GM10248 (cell line): ENCODE measurements at regions of chr17 and their contacts with region 1.

Region 1: DNA sequence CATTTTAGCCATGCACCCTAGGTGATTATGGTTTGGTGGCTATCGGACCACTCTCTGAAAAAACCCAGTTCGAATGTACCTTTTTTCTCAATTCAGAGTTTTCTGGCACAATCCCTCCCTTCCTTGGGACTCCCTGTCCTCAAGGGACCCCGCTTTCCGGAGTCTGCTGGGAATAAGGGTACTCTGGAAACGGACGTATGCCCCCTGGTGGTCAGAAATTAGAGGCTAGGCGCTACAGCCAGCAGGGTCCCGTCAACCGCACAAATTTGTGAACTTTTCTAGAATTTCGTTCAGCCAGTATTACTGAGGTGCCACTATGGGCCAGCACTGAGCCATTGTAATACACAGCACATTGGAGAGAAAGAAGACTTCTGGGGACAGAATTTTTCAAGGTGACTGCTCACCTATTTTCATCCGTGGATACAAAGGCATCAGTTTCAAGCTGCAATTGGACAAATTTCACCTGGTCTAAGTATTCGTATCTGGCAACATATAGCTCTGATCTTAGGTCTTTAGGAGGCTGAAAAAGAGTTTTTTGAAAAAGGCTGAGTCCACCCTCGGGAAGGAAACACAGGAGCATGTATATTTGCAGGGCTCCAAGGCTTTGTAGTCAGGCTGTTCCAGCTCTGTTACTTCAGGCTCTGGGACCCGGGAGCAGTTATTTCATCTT is 27.1 kb upstream of the CRYBA1 start:
- DNase-seq: peak; percentile 80
- CTCF ChIP-seq: peak; percentile 87

Region 2: DNA sequence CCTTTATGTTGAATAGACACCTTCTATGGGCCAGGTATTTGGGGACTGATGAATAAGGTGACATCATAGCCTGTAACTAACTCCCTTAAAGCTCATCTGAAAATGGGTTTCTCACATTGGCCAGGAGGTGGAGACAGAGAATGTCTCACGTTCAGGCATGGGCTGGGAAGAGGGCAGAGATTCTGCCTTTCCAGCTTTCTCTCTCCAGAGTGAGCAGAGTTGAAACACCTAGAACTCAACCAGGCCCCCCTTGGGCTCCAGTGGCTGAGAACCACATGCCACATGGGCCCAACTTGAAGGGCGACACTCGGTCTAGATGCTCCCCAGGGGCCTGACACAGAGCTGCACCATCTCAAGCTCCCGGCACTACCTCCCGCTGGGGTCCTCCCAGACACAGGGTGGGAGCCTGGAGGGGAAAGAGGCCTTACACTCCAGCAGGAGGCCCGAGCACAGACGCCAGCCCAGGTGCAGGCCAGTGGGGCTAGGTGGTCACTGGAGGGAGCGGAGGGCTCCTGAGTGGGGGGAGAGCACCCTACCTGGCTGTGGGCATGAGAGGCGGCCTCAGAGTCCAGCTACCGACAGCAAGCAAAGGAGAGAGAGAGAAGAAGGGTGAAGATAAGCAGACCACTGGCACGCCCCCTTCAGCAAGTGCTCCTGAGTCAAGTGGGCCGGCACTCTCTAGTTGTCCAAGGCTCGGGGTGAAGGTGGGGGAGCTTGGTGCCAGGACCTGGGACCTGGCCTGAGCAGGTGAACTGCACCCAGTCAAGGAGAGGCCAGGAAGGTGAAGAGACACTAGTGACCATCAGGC is 95.2 kb before region 1 on chr17:
- CTCF ChIA-PET with region 1: interaction called, 18 read pairs
- POLR2A ChIA-PET with region 1: no interaction called
- DNase-seq: peak; percentile 79
- CTCF ChIP-seq: peak; percentile 68

Region 3: GRCh38 chr17:29180034-29180787 is 39.3 kb before region 1 on chr17 and contains the start of gene MYO18A:
- CTCF ChIA-PET with region 1: interaction called, 59 read pairs
- POLR2A ChIA-PET with region 1: no interaction called
- DNase-seq: peak; percentile 94
- CTCF ChIP-seq: peak; percentile 89

Region 4: DNA sequence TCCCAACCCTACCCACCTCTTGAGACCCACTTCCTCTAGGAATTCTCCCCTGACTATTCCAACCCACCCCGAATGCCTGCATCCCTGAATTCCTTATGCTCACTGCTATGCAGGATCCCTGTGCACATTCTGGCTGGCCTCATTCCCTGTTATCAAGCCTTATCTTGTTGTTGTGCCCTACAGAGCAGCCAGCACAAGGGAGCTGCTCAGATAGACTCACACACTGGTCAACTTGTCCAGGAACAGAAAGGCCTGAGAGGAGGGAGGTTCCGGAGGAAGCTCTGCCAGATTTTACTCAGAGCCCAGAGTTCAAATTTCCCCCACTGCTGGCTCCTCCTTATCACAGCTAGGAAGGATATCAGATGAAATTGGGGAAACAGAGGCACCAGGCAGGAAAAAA is 14.5 kb before region 1 on chr17:
- CTCF ChIA-PET with region 1: interaction called, 43 read pairs
- POLR2A ChIA-PET with region 1: no interaction called
- DNase-seq: no peak
- CTCF ChIP-seq: no peak

Region 5: GRCh38 chr17:29241015-29241963 is 21.8 kb after region 1 on chr17:
- CTCF ChIA-PET with region 1: interaction called, 15 read pairs
- POLR2A ChIA-PET with region 1: no interaction called
- DNase-seq: no peak
- CTCF ChIP-seq: no peak